PC-9 (cell line): ENCODE measurements at regions of chr3 and their contacts with region 1.

Region 1: GRCh38 chr3:159804726-159805410 is 183.8 kb upstream of the IL12A start:
- DNase-seq: peak; percentile 73
- H3K4me3 ChIP-seq: no peak overlapping the region
- H3K27ac ChIP-seq: no peak overlapping the region
- H3K4me1 ChIP-seq: no peaks in the 10 kb centered on the region
- H3K27me3 ChIP-seq: no peaks in the 10 kb centered on the region
- CTCF ChIP-seq: peak; percentile 93

Region 2: DNA sequence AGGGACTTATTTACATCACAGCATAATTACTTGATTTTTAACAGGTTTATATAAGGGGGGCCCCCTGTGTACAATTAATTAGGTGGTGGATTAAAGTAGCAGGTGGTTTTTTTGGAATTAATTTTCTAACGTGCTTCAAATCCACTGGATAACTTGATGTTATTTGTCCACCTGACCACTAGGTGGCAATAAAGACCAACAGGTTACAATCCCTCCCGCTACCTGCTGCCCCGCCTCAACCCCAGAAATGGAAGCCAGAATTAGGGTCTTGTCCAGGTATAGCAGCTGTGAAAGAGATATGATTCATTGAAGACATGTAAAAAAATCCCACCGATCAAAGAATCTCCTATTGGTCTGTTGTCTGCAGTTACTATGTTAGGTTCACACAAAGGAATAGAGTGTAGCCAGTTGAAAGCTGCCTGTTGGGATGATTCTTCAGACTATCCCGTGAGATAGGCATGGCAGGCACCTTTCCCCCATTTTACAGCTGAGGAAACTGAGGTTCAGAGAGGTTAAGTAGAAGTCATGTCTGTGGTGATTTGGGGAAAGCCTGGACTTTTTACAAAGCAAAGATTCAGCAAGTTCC is 959.0 kb before region 1 on chr3:
- CTCF ChIA-PET with region 1: no interaction called
- POLR2A ChIA-PET with region 1: no interaction called
- intact Hi-C with region 1: loop called (anchors 5 kb)
- DNase-seq: peak; percentile 43 to 49
- H3K4me3 ChIP-seq: no peak overlapping the region
- H3K27ac ChIP-seq: no peak overlapping the region
- H3K4me1 ChIP-seq: no peaks in the 10 kb centered on the region
- H3K27me3 ChIP-seq: no peaks in the 10 kb centered on the region
- CTCF ChIP-seq: peak; percentile 96

Region 3: GRCh38 chr3:159185443-159186050 is 619.3 kb before region 1 on chr3:
- CTCF ChIA-PET with region 1: no interaction called
- POLR2A ChIA-PET with region 1: no interaction called
- intact Hi-C with region 1: no loop called
- DNase-seq: no peak
- H3K4me3 ChIP-seq: no peak overlapping the region
- H3K27ac ChIP-seq: no peak overlapping the region
- H3K4me1 ChIP-seq: peaks cover 9% of the 10 kb centered on the region; the same call in 1 of the 2 replicates
- H3K27me3 ChIP-seq: no peaks in the 10 kb centered on the region
- CTCF ChIP-seq: no peak

Region 4: DNA sequence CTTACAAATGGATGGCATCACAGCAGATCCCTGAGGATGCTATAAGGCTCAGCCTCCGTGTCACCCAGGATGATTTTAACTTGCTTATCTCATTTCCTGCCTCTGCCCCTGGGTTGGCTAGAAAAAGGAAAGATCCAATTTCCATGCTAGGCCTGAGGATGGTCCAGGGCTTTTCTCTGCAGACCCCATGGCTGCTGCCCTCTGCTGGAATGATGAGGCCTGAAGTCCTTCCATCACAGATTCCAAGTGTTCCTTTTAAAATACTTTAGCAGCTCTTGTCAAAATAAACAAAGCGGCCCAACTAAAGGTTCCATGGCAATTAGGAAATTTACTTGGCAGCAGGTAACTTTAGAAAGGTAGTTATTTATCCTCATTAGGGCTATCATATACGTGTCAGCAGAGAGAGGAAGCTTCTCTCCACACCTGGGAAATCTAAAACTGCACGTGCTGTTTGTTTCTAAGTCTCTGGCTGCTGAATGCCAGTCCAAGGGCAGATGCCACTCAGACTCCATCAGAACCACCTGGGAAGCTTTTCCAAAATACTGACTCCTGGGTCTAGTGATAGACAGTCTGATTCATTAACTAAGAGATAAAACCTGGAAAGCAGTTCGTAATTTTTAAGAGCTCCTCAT is 218.2 kb before region 1 on chr3:
- CTCF ChIA-PET with region 1: no interaction called
- POLR2A ChIA-PET with region 1: no interaction called
- intact Hi-C with region 1: loop called (anchors 1 kb)
- DNase-seq: peak in 1 of 2 experiments; percentile 28
- H3K4me3 ChIP-seq: no peak overlapping the region
- H3K27ac ChIP-seq: no peak overlapping the region
- H3K4me1 ChIP-seq: no peaks in the 10 kb centered on the region
- H3K27me3 ChIP-seq: no peaks in the 10 kb centered on the region
- CTCF ChIP-seq: peak; percentile 66

Region 5: DNA sequence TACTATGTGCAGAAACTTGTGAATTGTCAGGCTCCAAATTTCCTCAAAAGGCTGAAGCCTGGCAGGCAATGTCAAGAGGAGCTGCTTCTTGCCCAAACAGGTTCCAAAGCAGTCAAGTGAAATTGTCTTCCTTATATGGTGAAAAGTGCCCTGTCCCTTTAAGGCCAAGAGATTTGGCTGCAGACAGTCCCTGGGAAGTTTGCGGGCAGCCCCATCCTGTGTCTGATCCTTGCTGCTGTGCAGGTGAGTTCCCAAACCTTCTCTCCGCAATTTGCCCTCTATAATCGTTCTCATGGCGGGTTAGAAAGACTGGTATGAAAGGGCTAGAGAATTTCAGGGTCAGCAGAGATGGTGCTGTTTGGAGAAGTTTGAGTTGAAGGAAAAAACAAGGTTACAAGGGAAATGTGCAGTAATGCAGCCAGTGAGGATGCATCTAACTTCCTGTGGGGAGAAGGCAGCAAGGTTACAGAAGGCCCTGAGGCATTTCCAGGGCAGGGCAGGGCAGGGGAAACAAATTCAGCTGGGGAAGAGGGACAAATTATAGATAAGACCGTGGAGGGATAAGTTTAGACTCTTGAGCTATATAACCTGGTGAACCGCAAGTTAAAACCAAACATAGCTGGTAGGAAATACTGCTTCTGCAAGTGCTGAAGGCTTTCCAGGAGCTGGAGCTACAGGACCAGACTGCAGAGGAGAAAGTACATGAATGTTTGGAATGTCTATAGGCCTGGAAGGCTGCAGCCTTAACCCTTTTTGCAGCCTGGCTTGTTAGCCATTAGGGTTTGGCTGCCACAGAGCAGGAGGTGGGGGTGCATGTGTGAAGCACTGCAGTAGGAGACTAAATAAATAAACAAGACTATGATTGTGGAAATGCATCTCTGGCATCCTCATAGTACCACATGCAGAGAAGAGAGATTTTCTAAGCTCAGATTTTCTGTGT is 72.4 kb before region 1 on chr3:
- CTCF ChIA-PET with region 1: interaction called, 8 read pairs
- POLR2A ChIA-PET with region 1: interaction called, 3 read pairs
- intact Hi-C with region 1: loop called (anchors 2 kb)
- DNase-seq: peak; percentile 69 to 73
- H3K4me3 ChIP-seq: peak overlapping the region; percentile 38; the same call in 1 of the 2 replicates
- H3K27ac ChIP-seq: no peak overlapping the region
- H3K4me1 ChIP-seq: peaks cover 23% of the 10 kb centered on the region
- H3K27me3 ChIP-seq: no peaks in the 10 kb centered on the region
- CTCF ChIP-seq: no peak

Region 6: GRCh38 chr3:159787191-159787590 is 17.7 kb before region 1 on chr3:
- CTCF ChIA-PET with region 1: interaction called, 18 read pairs
- POLR2A ChIA-PET with region 1: interaction called, 14 read pairs
- intact Hi-C with region 1: no loop called
- DNase-seq: peak; percentile 82 to 98
- H3K4me3 ChIP-seq: peak overlapping the region; percentile 30; the same call in 1 of the 2 replicates
- H3K27ac ChIP-seq: peak overlapping the region; percentile 90
- H3K4me1 ChIP-seq: peaks cover 64% of the 10 kb centered on the region
- H3K27me3 ChIP-seq: no peaks in the 10 kb centered on the region
- CTCF ChIP-seq: no peak

Region 7: DNA sequence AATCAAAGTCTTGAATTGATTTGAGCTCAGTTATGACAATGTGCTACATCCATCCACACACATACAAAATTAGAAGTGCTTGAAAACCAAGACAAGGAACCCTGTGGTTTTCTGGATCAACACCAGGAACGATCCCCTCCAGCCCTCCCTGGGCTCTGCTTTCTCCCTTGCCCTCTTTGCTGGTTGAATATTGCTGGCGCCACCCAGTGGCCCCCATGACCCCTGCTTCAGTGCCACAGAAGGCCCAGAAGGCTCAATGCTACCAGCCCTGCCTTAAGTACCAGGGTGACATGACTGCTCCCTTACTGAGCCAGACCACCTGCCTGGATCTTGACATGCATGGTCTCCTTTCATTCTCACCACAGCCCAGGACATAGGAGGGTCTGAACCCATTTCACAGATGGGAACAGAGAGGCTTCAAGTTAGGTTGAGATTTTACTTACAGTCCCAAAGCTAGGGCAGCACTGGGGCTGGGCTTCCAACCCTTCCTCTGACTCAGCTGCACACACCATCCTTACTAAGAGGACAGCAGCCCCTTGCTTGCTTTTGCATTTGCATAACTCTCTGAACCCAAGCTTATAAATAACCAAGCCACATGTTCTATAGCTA is 198.8 kb after region 1 on chr3:
- CTCF ChIA-PET with region 1: no interaction called
- POLR2A ChIA-PET with region 1: no interaction called
- intact Hi-C with region 1: loop called (anchors 5 kb)
- DNase-seq: peak in 1 of 2 experiments; percentile 65
- H3K4me3 ChIP-seq: no peak overlapping the region
- H3K27ac ChIP-seq: no peak overlapping the region
- H3K4me1 ChIP-seq: no peaks in the 10 kb centered on the region
- H3K27me3 ChIP-seq: no peaks in the 10 kb centered on the region
- CTCF ChIP-seq: peak; percentile 77

Region 8: DNA sequence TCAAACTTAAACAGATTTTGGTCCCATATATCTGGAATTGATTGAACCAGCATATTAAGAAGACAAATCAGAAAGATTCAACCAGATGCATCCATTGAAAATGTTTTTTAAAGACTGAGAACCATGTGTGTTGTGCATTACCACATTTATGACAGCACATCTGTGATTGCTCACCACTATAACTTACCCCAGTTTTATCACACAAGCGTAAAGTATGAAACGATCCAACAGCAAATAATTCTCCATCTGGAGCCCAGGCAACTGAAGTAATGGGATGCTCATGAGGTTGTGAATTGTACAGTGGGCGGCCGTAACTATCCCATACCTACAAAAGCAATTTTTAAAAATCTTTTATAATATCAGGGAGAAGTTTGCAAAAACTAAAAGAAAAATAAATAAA is 551.0 kb after region 1 on chr3:
- CTCF ChIA-PET with region 1: no interaction called
- POLR2A ChIA-PET with region 1: no interaction called
- intact Hi-C with region 1: no loop called
- DNase-seq: no peak
- H3K4me3 ChIP-seq: no peak overlapping the region
- H3K27ac ChIP-seq: no peak overlapping the region
- H3K4me1 ChIP-seq: no peaks in the 10 kb centered on the region
- H3K27me3 ChIP-seq: no peaks in the 10 kb centered on the region
- CTCF ChIP-seq: no peak